ENCODE measurements at regions of chr6 and their contacts with region 1.

Region 1: DNA sequence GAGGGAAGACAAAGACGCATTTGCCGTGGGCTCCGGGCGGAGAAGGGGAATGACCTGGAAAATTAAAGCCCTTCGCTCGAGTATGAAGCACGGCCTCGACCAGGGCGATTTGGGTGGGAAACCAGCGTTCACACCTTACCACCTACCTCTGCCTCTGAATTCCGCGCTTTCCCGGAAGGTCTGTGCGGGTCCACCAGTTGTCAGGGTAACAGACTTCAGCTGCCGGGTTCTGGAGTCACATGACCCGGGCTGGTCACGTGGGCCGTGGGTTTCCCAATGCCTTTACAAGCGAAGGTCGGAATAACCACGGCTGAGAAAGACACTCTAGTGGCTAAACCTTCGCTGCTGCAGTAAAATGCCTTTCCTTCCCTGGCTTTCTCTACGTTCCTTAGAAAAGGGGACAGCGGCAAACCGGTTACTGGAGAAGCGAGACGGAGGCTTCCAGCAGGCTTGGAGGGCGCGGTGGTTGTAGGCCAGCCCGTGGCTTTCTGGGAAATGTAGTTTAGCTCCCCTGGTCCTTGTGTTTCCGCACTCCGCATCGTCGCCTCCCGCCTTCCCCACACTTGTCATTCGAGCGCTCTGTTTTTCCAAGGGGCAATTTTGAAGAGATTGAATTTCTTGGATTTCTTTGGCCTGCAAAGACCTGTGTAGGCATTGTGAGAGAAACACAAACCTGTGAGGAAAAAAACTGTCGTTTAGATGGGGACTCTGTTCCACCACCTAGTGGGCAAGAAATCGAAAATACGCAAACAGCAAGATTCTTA is at the start of gene CEP162:
- DNase-seq: peak; percentile 85 to 93 (median 88)
- H3K4me3 ChIP-seq: peak within 1 kb of the TSS; percentile 92
- H3K4me3 Mint-ChIP-seq: peak within 1 kb of the TSS; percentile 98 to 100 (median 99)
- H3K27ac ChIP-seq: peak within 1 kb of the TSS; percentile 70
- H3K27ac Mint-ChIP-seq: peak within 1 kb of the TSS; percentile 83 to 99 (median 97)
- H3K4me1 ChIP-seq: peaks cover 15% of the 10 kb centered on the region
- H3K4me1 Mint-ChIP-seq: peaks cover 26 to 39% (median 32%) of the 10 kb centered on the region in 3 donors
- H3K27me3 ChIP-seq: no peaks in the 10 kb centered on the region
- H3K27me3 Mint-ChIP-seq: peaks cover 7% of the 10 kb centered on the region in 2 donors
- total RNA-seq, gene CEP162: 5.5 to 6.0 TPM

Region 2: GRCh38 chr6:83859410-83860358 is 367.9 kb before region 1 on chr6 and contains the start of gene CYB5R4:
- CTCF ChIA-PET with region 1: interaction called, 17 read pairs
- POLR2A ChIA-PET with region 1: interaction called, 6 read pairs
- DNase-seq: peak; percentile 87 to 96 (median 93)
- H3K4me3 ChIP-seq: peak within 1 kb of the TSS; percentile 90
- H3K4me3 Mint-ChIP-seq: peak within 1 kb of the TSS; percentile 91 to 99 (median 96)
- H3K27ac ChIP-seq: peak within 1 kb of the TSS; percentile 86
- H3K27ac Mint-ChIP-seq: peak within 1 kb of the TSS; percentile 75 to 97 (median 91)
- H3K4me1 ChIP-seq: peaks cover 27% of the 10 kb centered on the region
- H3K4me1 Mint-ChIP-seq: peaks cover 32 to 52% (median 43%) of the 10 kb centered on the region in 3 donors
- H3K27me3 ChIP-seq: peaks cover 8% of the 10 kb centered on the region
- H3K27me3 Mint-ChIP-seq: peaks cover 9 to 11% of the 10 kb centered on the region in 2 donors
- total RNA-seq, gene CYB5R4: 31.6 to 33.6 TPM

Measured in CD8-positive, alpha-beta memory T cell (primary cell).